HEK293 (cell line): ENCODE measurements at regions of chr7 and their contacts with region 1.

Region 1: GRCh38 chr7:4973728-4974198 is 14.8 kb upstream of the MMD2 start:
- H3K4me3 ChIP-seq: peak overlapping the region; percentile 63
- H3K27ac ChIP-seq: peak overlapping the region; percentile 78
- H3K4me1 ChIP-seq: no peaks in the 10 kb centered on the region
- CTCF ChIP-seq: peak; percentile 87

Region 2: DNA sequence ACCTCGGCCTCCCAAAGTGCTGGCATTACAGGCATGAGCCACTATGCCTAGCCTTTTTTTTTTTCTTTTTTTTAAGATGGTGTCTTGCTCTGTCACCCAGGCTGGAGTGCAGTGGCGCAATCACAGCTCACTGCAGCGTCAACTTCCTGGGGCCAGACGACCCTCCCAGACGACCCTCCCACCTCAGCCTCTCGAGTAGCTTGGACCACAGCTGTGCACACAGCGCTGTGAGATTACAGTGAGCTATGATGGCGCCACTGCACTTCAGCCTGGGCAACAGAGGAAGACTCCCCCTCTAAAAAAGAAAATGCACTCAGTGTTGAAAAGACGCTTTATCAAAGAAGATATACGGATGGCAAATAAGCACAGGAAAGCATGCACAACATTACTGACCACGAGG is 199.7 kb after region 1 on chr7:
- CTCF ChIA-PET with region 1: interaction called, 10 read pairs
- POLR2A ChIA-PET with region 1: no interaction called
- H3K4me3 ChIP-seq: no peak overlapping the region
- H3K27ac ChIP-seq: no peak overlapping the region
- H3K4me1 ChIP-seq: no peaks in the 10 kb centered on the region
- CTCF ChIP-seq: no peak